Activated CD4-positive, alpha-beta memory T cell treated with anti-CD3 and anti-CD28 coated beads for 36 hours (primary cell): ENCODE measurements at regions of chr13 and their contacts with region 1.

Region 1: DNA sequence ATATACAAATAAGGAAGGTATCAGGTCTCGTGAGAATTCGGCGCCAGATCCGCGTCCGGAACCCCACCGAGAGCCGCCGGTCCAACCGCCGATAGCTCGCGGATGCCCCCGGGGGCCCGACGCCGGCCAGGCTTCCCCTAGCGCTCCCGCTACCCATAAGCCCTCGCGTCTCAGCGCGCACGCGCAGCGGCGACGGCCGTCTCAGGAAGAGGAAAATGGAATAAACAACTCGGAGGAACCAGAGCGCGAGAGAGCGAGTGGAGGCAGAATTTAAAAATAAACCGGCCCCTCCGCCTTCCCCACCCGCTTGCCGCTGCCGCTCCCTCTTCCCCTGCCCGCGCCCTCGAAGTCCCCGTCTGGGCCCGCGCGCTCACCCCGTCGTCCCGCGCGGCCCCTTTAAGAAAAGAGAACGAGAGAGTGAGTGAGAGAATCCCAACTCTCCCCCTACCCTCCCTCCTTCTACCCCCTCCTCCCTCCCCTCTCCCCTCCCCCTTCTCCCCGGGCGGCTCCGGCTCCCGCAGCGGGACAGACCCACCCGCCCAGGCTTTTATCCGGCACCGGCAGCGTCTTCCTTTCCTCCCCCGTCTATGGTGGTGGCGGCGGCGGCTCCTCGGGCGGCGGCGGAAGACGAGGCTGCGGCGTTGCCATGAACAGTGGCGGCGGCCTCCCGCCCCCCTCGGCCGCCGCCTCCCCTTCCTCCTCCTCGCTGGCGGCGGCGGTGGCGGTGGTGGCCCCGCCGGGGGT is at the start of gene PAN3:
- DNase-seq: peak; percentile 94
- H3K4me3 Mint-ChIP-seq: peak within 1 kb of the TSS; percentile 91
- H3K27ac Mint-ChIP-seq: peak within 1 kb of the TSS; percentile 98
- H3K4me1 Mint-ChIP-seq: peaks cover 41% of the 10 kb centered on the region
- H3K27me3 Mint-ChIP-seq: no peaks in the 10 kb centered on the region
- total RNA-seq, gene PAN3: 26.0 to 28.3 TPM

Region 2: GRCh38 chr13:27171827-27172494 is 966.2 kb before region 1 on chr13:
- CTCF ChIA-PET with region 1: no interaction called
- POLR2A ChIA-PET with region 1: no interaction called
- intact Hi-C with region 1: loop called (anchors 2 kb)
- DNase-seq: peak; percentile 92
- H3K4me3 Mint-ChIP-seq: peak overlapping the region; percentile 75
- H3K27ac Mint-ChIP-seq: peak overlapping the region; percentile 77
- H3K4me1 Mint-ChIP-seq: peaks cover 54% of the 10 kb centered on the region
- H3K27me3 Mint-ChIP-seq: no peaks in the 10 kb centered on the region

Region 3: GRCh38 chr13:27424246-27425157 is 713.7 kb before region 1 on chr13 and contains the start of gene GTF3A:
- CTCF ChIA-PET with region 1: no interaction called
- POLR2A ChIA-PET with region 1: no interaction called
- intact Hi-C with region 1: loop called (anchors 1 kb)
- DNase-seq: peak; percentile 91
- H3K4me3 Mint-ChIP-seq: peak within 1 kb of the TSS; percentile 85
- H3K27ac Mint-ChIP-seq: peak within 1 kb of the TSS; percentile 95
- H3K4me1 Mint-ChIP-seq: peaks cover 35% of the 10 kb centered on the region
- H3K27me3 Mint-ChIP-seq: no peaks in the 10 kb centered on the region
- total RNA-seq, gene GTF3A: 217 to 218 TPM

Region 4: GRCh38 chr13:27620377-27621115 is 517.6 kb before region 1 on chr13 and contains the start of gene LNX2:
- CTCF ChIA-PET with region 1: no interaction called
- POLR2A ChIA-PET with region 1: no interaction called
- intact Hi-C with region 1: loop called (anchors 1 kb)
- DNase-seq: peak; percentile 98
- H3K4me3 Mint-ChIP-seq: peak within 1 kb of the TSS; percentile 92
- H3K27ac Mint-ChIP-seq: peak within 1 kb of the TSS; percentile 88
- H3K4me1 Mint-ChIP-seq: peaks cover 54% of the 10 kb centered on the region
- H3K27me3 Mint-ChIP-seq: no peaks in the 10 kb centered on the region
- total RNA-seq, gene LNX2: 5.0 to 5.4 TPM

Region 5: GRCh38 chr13:27665333-27665732 is 472.9 kb before region 1 on chr13:
- CTCF ChIA-PET with region 1: no interaction called
- POLR2A ChIA-PET with region 1: no interaction called
- intact Hi-C with region 1: no loop called
- DNase-seq: no peak
- H3K4me3 Mint-ChIP-seq: no peak overlapping the region
- H3K27ac Mint-ChIP-seq: no peak overlapping the region
- H3K4me1 Mint-ChIP-seq: no peaks in the 10 kb centered on the region
- H3K27me3 Mint-ChIP-seq: no peaks in the 10 kb centered on the region

Region 6: GRCh38 chr13:28117689-28118377 is 20.4 kb before region 1 on chr13:
- CTCF ChIA-PET with region 1: no interaction called
- POLR2A ChIA-PET with region 1: no interaction called
- intact Hi-C with region 1: loop called (anchors 2 kb)
- DNase-seq: no peak
- H3K4me3 Mint-ChIP-seq: no peak overlapping the region
- H3K27ac Mint-ChIP-seq: no peak overlapping the region
- H3K4me1 Mint-ChIP-seq: peaks cover 13% of the 10 kb centered on the region
- H3K27me3 Mint-ChIP-seq: peaks cover 4% of the 10 kb centered on the region

Region 7: GRCh38 chr13:28268800-28269223 is 130.6 kb after region 1 on chr13:
- CTCF ChIA-PET with region 1: no interaction called
- POLR2A ChIA-PET with region 1: no interaction called
- intact Hi-C with region 1: loop called (anchors 1 kb)
- DNase-seq: no peak
- H3K4me3 Mint-ChIP-seq: no peak overlapping the region
- H3K27ac Mint-ChIP-seq: peak overlapping the region; percentile 13
- H3K4me1 Mint-ChIP-seq: peaks cover 10% of the 10 kb centered on the region
- H3K27me3 Mint-ChIP-seq: no peaks in the 10 kb centered on the region

Region 8: DNA sequence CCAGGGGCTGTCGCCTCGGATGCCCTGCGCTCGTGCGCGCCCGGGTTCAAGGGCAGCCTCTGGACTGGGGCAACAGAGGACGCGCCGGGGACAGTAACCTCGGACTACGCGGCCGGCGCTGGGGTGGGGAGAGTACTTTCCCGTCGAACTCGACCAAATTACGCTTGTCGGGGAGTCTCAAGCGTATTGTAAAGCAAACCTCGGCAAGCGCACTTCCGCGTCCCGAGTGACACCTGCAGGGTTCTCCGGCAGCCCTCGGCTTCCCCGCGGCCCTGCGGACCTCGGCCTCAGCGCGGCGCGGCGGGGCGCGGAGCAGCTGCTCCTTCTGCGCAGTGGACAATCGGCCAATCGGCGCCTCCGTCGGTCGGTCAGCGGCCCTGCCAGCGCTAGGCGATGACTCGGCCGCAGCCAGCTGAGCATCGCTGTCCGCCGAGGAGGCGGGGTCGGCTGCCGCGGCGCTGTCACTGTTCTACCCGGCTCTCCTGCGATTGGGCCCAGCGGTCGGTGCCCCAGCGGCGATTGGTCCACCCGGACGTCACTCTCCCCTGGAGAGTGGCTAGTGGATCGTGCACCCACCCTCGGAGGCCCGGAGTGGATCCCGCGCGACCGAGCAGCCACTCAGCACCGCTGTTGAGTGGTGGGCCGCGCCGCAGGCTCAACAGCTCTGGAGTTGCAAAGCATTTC is 580.5 kb after region 1 on chr13 and contains the start of gene SLC46A3:
- CTCF ChIA-PET with region 1: no interaction called
- POLR2A ChIA-PET with region 1: no interaction called
- intact Hi-C with region 1: loop called (anchors 1 kb)
- DNase-seq: peak; percentile 98
- H3K4me3 Mint-ChIP-seq: peak within 1 kb of the TSS; percentile 87
- H3K27ac Mint-ChIP-seq: peak within 1 kb of the TSS; percentile 76
- H3K4me1 Mint-ChIP-seq: peaks cover 30% of the 10 kb centered on the region
- H3K27me3 Mint-ChIP-seq: no peaks in the 10 kb centered on the region
- total RNA-seq, gene SLC46A3: 3.4 to 3.8 TPM